ENCODE measurements at regions of chr4 and their contacts with region 1.

Region 1: DNA sequence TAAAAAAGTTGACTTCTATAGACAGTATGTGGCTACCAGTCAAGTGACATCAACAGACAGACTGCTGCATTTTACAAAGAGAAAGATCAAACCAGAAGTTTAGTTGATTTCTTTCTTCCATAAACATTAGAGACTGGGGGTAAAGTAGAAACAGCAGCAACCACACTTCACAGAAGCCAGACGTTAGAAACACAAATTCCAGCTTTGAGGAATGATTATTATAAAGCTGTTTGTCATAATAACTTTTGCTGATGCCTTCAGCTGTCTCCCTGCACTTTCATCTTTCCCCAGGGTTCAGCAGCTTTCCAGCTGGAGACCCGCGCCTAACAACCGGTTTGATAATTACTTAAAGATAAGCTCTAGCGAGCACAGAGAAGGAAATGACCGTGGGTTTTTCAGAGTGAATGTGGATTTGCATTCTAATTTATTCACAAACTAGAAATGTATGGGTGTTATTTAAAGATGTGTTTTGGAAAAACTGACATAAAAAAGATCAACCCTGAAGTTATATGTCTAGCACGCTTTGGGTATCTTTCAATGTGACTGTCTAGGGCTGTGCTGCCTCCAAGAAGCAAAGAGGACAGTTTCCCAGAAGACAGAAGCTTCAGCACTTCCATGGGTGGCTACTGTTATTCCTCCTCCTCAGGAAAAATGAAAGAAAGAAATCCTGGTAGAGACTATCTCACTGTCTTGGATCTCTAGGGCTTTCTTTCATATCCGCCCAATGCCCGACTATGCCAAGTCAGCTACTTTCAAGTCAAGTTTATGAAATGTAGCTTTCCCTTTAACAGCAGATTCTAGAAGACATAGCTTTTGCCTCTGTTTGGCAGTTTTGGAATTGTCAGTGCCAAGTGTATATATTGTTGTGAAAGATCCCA is 15.0 kb upstream of the ENAM start:
- DNase-seq: no peak
- H3K4me3 Mint-ChIP-seq: no peak overlapping the region
- H3K27ac Mint-ChIP-seq: no peak overlapping the region
- H3K4me1 Mint-ChIP-seq: peaks cover 13% of the 10 kb centered on the region
- H3K27me3 Mint-ChIP-seq: peaks cover under 1% of the 10 kb centered on the region

Region 2: GRCh38 chr4:70505151-70505748 is 108.3 kb before region 1 on chr4:
- CTCF ChIA-PET with region 1: no interaction called
- intact Hi-C with region 1: no loop called
- DNase-seq: peak; percentile 64
- H3K4me3 Mint-ChIP-seq: no peak overlapping the region
- H3K27ac Mint-ChIP-seq: no peak overlapping the region
- H3K4me1 Mint-ChIP-seq: no peaks in the 10 kb centered on the region
- H3K27me3 Mint-ChIP-seq: no peaks in the 10 kb centered on the region

Region 3: GRCh38 chr4:72112514-72113156 is 1499.1 kb after region 1 on chr4:
- CTCF ChIA-PET with region 1: no interaction called
- intact Hi-C with region 1: loop called (anchors 10 kb)
- DNase-seq: peak; percentile 54
- H3K4me3 Mint-ChIP-seq: no peak overlapping the region
- H3K27ac Mint-ChIP-seq: no peak overlapping the region
- H3K4me1 Mint-ChIP-seq: peaks cover 7% of the 10 kb centered on the region
- H3K27me3 Mint-ChIP-seq: peaks cover 2% of the 10 kb centered on the region